ENCODE measurements at regions of chr18 and their contacts with region 1.

Region 1: GRCh38 chr18:70205421-70206397 is at the start of gene RTTN:
- DNase-seq: peak; percentile 90 to 98 (median 96)

Region 2: DNA sequence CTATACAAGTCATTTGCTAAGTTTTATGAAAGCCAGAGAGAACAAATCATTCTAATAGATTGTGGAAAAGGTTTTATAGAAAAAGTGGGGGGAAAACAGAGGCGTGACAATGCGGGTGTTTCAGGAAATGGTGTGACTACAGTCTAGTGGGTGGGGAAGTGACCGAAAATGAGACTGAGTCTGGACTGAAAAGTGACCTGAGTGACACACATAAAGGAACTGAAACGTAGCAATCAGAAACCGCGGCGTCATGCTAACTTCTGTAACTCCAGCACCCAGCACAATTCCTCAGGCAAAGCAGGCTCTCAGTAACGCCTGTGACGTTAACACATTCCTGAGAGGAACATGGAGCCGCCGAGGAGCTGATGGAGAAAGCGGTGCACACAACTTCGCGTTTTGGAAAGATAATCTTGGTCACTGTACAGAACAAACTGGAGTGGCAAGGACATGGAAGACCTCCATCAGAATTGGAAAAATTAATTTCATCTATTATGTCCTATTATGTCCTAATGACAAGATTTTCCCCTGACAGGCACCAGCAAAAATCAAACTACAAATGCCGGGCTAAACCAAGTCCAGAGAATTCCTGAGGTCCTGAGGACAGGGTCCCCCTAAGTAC is 256.7 kb before region 1 on chr18:
- intact Hi-C with region 1: no loop called
- DNase-seq: peak in 27 of 42 donors; percentile 6 to 52 (median 31)

Region 3: GRCh38 chr18:70075906-70076305 is 129.8 kb before region 1 on chr18:
- intact Hi-C with region 1: no loop called
- DNase-seq: no peak

Region 4: DNA sequence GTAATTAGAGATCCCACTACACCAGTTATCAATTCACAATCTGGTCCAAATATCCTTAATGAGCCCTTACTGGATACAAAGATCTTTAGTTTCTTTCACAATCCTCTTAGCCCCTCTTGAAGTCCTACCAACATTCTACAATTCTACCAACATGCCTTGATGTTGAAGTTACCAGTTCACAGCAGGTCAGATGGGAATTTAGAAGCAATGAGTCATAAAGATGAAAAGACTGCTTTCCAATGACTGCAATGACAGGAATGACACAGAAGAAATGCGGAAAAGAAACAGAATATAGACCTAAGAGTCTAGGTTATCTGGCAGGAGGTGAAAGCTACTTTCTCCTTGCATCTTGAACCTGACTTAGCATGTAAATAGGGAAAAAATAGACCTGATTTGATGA is 24.7 kb before region 1 on chr18:
- intact Hi-C with region 1: no loop called
- DNase-seq: no peak

Region 5: GRCh38 chr18:70288851-70289328 is 83.2 kb after region 1 on chr18 and contains the start of gene SOCS6:
- intact Hi-C with region 1: loop called (anchors 2 kb)
- DNase-seq: peak in 37 of 42 donors; percentile 40 to 81 (median 65)

Region 6: GRCh38 chr18:70431203-70431624 is 225.5 kb after region 1 on chr18:
- intact Hi-C with region 1: loop called (anchors 5 kb)
- DNase-seq: no peak